ENCODE measurements at regions of chr9 and their contacts with region 1.

Region 1: DNA sequence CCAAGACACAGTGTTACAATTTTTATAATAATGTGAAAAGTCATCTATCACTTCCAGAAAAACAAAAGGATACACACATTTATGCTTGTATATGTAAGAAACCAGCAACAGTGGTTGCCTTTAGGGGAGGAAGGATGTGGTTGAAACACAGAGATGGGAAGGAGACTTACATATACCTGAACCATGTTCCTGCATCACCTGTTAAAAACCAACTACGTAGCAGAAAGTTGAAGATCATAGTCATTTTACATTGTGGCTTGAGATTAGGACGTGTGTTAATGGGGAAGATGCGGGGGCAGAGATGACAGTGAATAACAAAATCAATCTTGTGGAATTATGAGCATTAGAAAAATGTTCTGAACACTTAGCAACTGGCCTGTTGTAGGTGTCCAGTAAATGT is 307.3 kb downstream of the MLLT3 start:
- DNase-seq: peak in 24 of 35 experiments; percentile 9 to 62 (median 25)
- ATAC-seq: peak; percentile 81 to 98 (median 86)
- H3K4me3 ChIP-seq: no peak overlapping the region
- H3K4me3 Mint-ChIP-seq: peak overlapping the region in 1 of 3 donors; percentile 9
- H3K27ac ChIP-seq: peak overlapping the region; percentile 68
- H3K27ac Mint-ChIP-seq: peak overlapping the region; percentile 83 to 86
- H3K4me1 ChIP-seq: peaks cover 21 to 46% of the 10 kb centered on the region in 2 experiments
- H3K4me1 Mint-ChIP-seq: peaks cover 63 to 83% (median 69%) of the 10 kb centered on the region in 3 donors
- H3K27me3 ChIP-seq: no peaks in the 10 kb centered on the region
- H3K27me3 Mint-ChIP-seq: no peaks in the 10 kb centered on the region

Region 2: DNA sequence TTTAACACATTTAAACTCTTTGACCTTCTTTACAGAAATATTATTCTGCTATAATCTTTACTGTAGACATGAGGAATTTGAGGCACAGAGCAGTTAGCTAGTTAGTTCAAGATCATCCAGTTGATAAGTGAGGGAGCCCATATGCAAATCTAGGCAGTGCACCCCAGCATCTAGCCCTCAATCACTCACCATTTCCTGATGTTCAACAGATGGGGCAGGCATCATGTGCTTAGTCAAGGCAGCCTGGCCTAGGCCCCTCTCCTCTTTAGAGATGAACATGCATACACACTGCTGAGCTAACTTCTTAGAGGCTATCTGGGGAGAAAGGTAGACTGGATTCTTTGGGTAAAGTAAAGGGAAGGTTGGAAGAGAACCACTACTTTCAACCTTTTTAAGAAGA is 319.4 kb before region 1 on chr9:
- CTCF ChIA-PET with region 1: interaction called in 1 of 2 experiments, 16 read pairs
- POLR2A ChIA-PET with region 1: no interaction called
- DNase-seq: no peak
- ATAC-seq: no peak
- H3K4me3 ChIP-seq: no peak overlapping the region
- H3K4me3 Mint-ChIP-seq: no peak overlapping the region
- H3K27ac ChIP-seq: no peak overlapping the region
- H3K27ac Mint-ChIP-seq: no peak overlapping the region
- H3K4me1 ChIP-seq: peaks cover 0 to 6% of the 10 kb centered on the region in 2 experiments
- H3K4me1 Mint-ChIP-seq: peaks cover 21 to 27% (median 22%) of the 10 kb centered on the region in 3 donors
- H3K27me3 ChIP-seq: no peaks in the 10 kb centered on the region
- H3K27me3 Mint-ChIP-seq: no peaks in the 10 kb centered on the region

Region 3: GRCh38 chr9:20340511-20340861 is 25.5 kb after region 1 on chr9:
- CTCF ChIA-PET with region 1: no interaction called
- POLR2A ChIA-PET with region 1: no interaction called
- DNase-seq: no peak
- ATAC-seq: no peak
- H3K4me3 ChIP-seq: no peak overlapping the region
- H3K4me3 Mint-ChIP-seq: peak overlapping the region in 1 of 3 donors; percentile 2
- H3K27ac ChIP-seq: no peak overlapping the region
- H3K27ac Mint-ChIP-seq: no peak overlapping the region
- H3K4me1 ChIP-seq: peaks cover 3 to 4% of the 10 kb centered on the region in 2 experiments
- H3K4me1 Mint-ChIP-seq: peaks cover 19 to 45% (median 33%) of the 10 kb centered on the region in 3 donors
- H3K27me3 ChIP-seq: no peaks in the 10 kb centered on the region
- H3K27me3 Mint-ChIP-seq: no peaks in the 10 kb centered on the region

Measured in T-cell (primary cell).